A673 (cell line): ENCODE measurements at regions of chrX and their contacts with region 1.

Region 1: DNA sequence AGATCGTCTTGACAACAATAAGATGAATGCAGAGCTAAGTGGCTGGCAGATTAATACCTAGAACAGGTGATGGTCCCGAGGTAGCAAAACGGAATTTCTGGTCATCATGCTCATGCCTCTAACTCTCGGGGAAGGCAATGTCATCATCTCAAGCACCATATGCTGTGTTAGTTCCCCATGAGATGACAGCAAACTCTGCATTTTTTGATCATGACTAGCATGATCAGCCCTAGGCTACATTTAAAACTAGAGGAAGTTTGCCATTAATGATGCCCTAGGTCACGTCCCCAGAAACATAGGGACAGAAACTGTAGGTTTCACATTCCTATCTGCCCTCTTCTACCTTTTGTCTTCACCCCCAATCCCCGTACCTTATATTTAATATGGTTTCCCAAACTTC is 11.6 kb downstream of the LPAR4 start:
- DNase-seq: no peak
- H3K4me3 ChIP-seq: no peak overlapping the region
- H3K27ac ChIP-seq: no peak overlapping the region
- H3K4me1 ChIP-seq: no peaks in the 10 kb centered on the region
- H3K27me3 ChIP-seq: no peaks in the 10 kb centered on the region
- CTCF ChIP-seq: no peak

Region 2: DNA sequence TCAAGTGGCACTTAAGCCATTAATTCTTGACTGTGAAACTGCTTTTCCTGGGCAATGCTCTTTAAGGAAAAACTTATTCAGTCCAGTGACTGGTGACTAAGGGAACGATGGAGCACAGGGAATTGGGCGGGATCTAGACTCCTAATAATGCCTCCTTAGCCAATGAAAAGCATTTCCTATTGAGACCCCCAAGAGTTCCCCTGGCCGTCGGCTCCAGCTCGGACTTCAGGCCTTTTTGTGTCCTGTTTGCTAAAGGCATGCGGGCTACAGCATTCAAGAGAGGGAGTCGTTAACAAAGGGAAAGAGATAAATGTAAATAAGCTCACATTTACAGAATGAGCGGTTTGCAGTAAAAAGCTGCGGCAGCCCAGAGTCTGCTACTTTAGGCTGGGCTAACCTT is 11.6 kb before region 1 on chrX and contains the start of gene LPAR4:
- CTCF ChIA-PET with region 1: no interaction called
- POLR2A ChIA-PET with region 1: interaction called, 26 read pairs
- intact Hi-C with region 1: no loop called
- DNase-seq: peak; percentile 75
- H3K4me3 ChIP-seq: peak within 1 kb of the TSS; percentile 46
- H3K27ac ChIP-seq: peak within 1 kb of the TSS; percentile 59
- H3K4me1 ChIP-seq: peaks cover 9% of the 10 kb centered on the region
- H3K27me3 ChIP-seq: no peaks in the 10 kb centered on the region
- CTCF ChIP-seq: no peak
- total RNA-seq, gene LPAR4: 7.1 and 7.2 TPM in 2 replicates